Activated CD4-positive, alpha-beta T cell treated with anti-CD3 and anti-CD28 coated beads for 36 hours (primary cell): ENCODE measurements at regions of chr18 and their contacts with region 1.

Region 1: DNA sequence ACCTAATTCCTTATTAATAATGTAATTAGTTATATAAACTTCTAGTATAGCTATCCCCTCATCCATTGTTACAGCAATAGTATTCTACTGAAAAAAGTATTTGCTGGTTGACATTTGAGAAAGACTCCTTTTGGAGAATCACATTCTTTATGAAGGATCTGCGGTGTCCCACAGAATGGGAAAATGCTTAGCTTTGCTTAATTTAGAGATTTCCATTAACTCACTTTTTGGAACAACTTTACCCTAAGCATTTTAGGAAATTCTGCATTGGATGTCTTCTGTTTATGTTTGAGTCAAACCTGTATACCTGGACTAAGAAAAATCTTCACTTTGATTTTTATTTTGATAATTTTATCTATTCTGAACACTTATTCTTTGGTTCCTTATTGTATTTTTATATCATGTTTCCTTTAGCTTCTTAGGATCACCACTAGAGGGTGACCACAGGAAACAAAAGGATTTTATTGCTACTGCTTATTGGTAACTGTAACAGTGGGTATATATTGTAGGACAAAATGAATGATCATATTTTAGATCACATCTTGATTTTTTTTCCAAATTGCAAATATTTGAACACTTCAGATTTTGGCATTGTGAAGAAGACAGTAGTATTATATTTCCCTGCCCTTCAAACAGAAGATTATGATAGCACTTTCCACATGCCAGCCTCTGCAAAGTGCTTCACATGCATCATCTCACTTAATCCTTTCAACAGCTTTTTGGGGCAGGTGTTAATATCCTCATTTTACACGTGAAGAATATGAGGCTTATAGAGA is 79.6 kb downstream of the MIB1 start:
- DNase-seq: no peak
- ATAC-seq: no peak
- H3K4me3 Mint-ChIP-seq: no peak overlapping the region
- H3K27ac Mint-ChIP-seq: no peak overlapping the region
- H3K4me1 Mint-ChIP-seq: no peaks in the 10 kb centered on the region
- H3K27me3 Mint-ChIP-seq: no peaks in the 10 kb centered on the region

Region 2: GRCh38 chr18:21361307-21361880 is 458.8 kb before region 1 on chr18:
- CTCF ChIA-PET with region 1: no interaction called
- POLR2A ChIA-PET with region 1: no interaction called
- intact Hi-C with region 1: no loop called
- DNase-seq: no peak
- ATAC-seq: no peak
- H3K4me3 Mint-ChIP-seq: no peak overlapping the region
- H3K27ac Mint-ChIP-seq: no peak overlapping the region
- H3K4me1 Mint-ChIP-seq: no peaks in the 10 kb centered on the region
- H3K27me3 Mint-ChIP-seq: peaks cover 5% of the 10 kb centered on the region

Region 3: GRCh38 chr18:21636769-21637168 is 183.5 kb before region 1 on chr18:
- CTCF ChIA-PET with region 1: no interaction called
- POLR2A ChIA-PET with region 1: no interaction called
- intact Hi-C with region 1: loop called in 1 of 2 experiments (anchors 10 kb)
- DNase-seq: no peak
- ATAC-seq: no peak
- H3K4me3 Mint-ChIP-seq: no peak overlapping the region
- H3K27ac Mint-ChIP-seq: peak overlapping the region; percentile 13
- H3K4me1 Mint-ChIP-seq: peaks cover 8% of the 10 kb centered on the region
- H3K27me3 Mint-ChIP-seq: no peaks in the 10 kb centered on the region

Region 4: GRCh38 chr18:21663578-21663977 is 156.6 kb before region 1 on chr18:
- CTCF ChIA-PET with region 1: no interaction called
- POLR2A ChIA-PET with region 1: no interaction called
- intact Hi-C with region 1: no loop called
- DNase-seq: no peak
- ATAC-seq: no peak
- H3K4me3 Mint-ChIP-seq: no peak overlapping the region
- H3K27ac Mint-ChIP-seq: no peak overlapping the region
- H3K4me1 Mint-ChIP-seq: peaks cover 2% of the 10 kb centered on the region
- H3K27me3 Mint-ChIP-seq: no peaks in the 10 kb centered on the region